Transverse colon (tissue), 4 donors: ENCODE measurements at regions of chr6 and their contacts with region 1.

Region 1: GRCh38 chr6:12890171-12890790 is 173.7 kb downstream of the PHACTR1 start:
- DNase-seq: no peak
- H3K4me3 ChIP-seq: no peak overlapping the region
- H3K27ac ChIP-seq: no peak overlapping the region
- H3K4me1 ChIP-seq: peaks cover 0 to 11% (median 2%) of the 10 kb centered on the region in 4 donors
- H3K27me3 ChIP-seq: no peaks in the 10 kb centered on the region
- CTCF ChIP-seq: peak in 3 of 5 experiments; percentile 31 to 42 (median 35)
- EP300 ChIP-seq: no peak
- POLR2A ChIP-seq: no peak

Region 2: DNA sequence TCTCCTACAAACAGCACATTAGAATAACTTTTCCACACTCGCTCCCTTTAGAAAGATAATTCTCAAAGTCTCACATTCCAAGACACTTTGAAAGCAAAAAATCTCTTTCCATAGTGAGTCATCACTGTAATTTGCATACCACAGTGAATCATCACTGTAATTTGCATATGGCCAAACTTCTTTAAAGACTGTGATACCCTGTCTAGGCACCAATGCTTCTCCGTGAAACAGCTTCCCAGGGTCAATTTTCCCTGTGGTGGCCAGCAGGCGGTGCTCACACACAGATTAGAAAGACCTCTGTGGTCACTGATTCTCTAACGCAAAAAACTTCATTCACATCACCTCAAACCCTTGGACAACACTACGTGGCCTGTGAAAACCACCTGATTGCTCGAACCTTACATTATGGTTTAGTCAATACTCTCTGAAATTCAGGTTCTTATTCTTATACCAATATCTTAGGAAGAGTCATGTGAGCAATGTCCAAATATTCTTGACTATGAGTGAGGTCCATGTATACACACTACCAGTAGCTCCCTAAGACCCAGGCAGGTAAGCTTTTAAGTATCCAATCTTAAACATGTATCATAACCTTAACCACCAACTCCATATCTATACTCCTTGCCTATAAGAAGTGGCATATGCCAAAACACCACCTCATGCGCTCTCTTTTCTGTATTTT is 252.2 kb before region 1 on chr6:
- in situ Hi-C with region 1: loop called (anchors 10 to 25 kb)
- intact Hi-C with region 1: loop called (anchors 10 kb)
- DNase-seq: peak; percentile 35
- H3K4me3 ChIP-seq: no peak overlapping the region
- H3K27ac ChIP-seq: no peak overlapping the region
- H3K4me1 ChIP-seq: no peaks in the 10 kb centered on the region
- H3K27me3 ChIP-seq: peaks cover 7% of the 10 kb centered on the region
- CTCF ChIP-seq: peak; percentile 41 to 60 (median 53)
- EP300 ChIP-seq: no peak
- POLR2A ChIP-seq: no peak

Region 3: GRCh38 chr6:12648171-12648570 is 242.1 kb before region 1 on chr6:
- in situ Hi-C with region 1: loop called in 3 of 4 experiments (anchors 10 to 25 kb)
- intact Hi-C with region 1: no loop called
- DNase-seq: no peak
- H3K4me3 ChIP-seq: no peak overlapping the region
- H3K27ac ChIP-seq: no peak overlapping the region
- H3K4me1 ChIP-seq: no peaks in the 10 kb centered on the region
- H3K27me3 ChIP-seq: peaks cover 6% of the 10 kb centered on the region
- CTCF ChIP-seq: no peak
- EP300 ChIP-seq: no peak
- POLR2A ChIP-seq: no peak

Region 4: DNA sequence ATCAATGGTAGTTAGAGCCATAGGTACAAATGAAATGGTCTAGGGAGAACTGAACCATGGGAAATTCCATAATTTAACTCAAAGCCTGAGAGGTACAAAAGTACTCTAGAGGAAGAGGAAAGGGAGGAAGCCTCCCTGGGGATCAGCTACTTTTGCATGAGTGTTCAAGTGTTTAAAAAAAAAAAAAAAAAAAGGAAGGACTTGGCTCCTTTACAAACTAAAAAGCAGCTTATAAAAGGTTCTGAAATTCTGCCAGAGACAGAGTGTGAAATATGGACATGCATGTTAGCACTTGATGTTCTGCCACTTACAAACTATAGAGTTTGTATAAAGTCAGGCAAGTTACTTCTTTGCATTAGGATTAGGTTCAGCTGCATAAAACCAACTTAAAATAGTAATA is 148.0 kb after region 1 on chr6:
- in situ Hi-C with region 1: no loop called
- intact Hi-C with region 1: no loop called
- DNase-seq: no peak
- H3K4me3 ChIP-seq: no peak overlapping the region
- H3K27ac ChIP-seq: peak overlapping the region in 1 of 4 donors; percentile 26
- H3K4me1 ChIP-seq: peaks cover 0 to 3% (median 1%) of the 10 kb centered on the region in 4 donors
- H3K27me3 ChIP-seq: no peaks in the 10 kb centered on the region
- CTCF ChIP-seq: no peak
- EP300 ChIP-seq: no peak
- POLR2A ChIP-seq: no peak